Esophagus muscularis mucosa (tissue), 4 donors: ENCODE measurements at regions of chr1 and their contacts with region 1.

Region 1: GRCh38 chr1:20633190-20634064 is at the start of gene PINK1:
- DNase-seq: peak; percentile 96
- H3K4me3 ChIP-seq: peak within 1 kb of the TSS; percentile 88 to 100 (median 98)
- H3K27ac ChIP-seq: peak within 1 kb of the TSS; percentile 94 to 97 (median 95)
- H3K4me1 ChIP-seq: peaks cover 24 to 35% (median 34%) of the 10 kb centered on the region in 4 donors
- H3K27me3 ChIP-seq: peaks cover 0 to 4% (median 0%) of the 10 kb centered on the region in 4 donors
- CTCF ChIP-seq: peak; percentile 99 to 100 (median 99)
- EP300 ChIP-seq: no peak
- POLR2A ChIP-seq: no peak
- total RNA-seq, gene PINK1: 175 to 330 (median 242) TPM

Region 2: DNA sequence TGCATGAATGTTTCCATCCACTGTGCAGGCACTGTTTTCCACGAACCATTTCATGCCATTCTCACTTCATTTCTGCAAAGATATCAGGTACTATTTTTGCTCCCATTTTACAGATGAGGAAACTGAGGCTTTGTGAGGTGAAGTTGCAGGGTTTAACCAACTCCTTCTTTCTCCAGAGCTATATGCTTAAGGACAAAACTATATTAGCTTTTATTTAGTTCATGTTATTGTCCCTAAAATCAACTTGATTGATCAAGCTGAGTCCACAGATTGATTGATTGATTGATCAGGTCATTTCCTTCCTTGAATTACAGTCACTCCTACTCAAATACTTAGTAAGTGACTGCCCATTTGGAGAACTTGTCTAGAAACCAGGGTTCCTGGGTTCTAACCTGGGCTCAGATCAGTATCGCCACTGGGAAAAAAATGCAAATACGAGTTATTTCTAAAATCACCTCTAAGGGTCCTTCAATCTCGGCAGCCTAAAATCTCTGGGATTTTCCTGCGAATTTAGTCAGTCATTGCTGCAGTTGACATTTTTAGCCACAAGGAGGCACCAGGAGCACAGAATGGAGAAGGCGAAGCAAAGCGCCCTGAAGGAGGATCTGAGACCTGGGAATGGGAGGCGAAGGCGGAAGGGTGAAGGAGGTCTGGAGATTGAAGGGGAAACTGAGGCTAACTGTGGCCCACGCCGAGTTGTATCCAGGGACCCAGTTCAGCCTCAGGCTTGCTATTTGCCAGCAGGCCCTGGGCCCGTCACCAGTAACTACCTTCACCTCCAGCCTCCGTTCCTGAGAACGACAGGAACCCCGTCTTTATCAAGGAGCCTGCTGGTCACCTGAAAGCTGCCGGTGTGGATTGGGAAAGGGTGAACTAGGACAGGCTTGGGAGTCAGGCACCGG is 111.2 kb before region 1 on chr1:
- intact Hi-C with region 1: loop called (anchors 1 kb)
- DNase-seq: no peak
- H3K4me3 ChIP-seq: peak overlapping the region in 1 of 4 donors; percentile 45
- H3K27ac ChIP-seq: no peak overlapping the region
- H3K4me1 ChIP-seq: peaks cover 0 to 7% (median 6%) of the 10 kb centered on the region in 4 donors
- H3K27me3 ChIP-seq: peaks cover 0 to 11% (median 0%) of the 10 kb centered on the region in 4 donors
- CTCF ChIP-seq: peak; percentile 84 to 96 (median 93)
- EP300 ChIP-seq: no peak
- POLR2A ChIP-seq: no peak

Region 3: DNA sequence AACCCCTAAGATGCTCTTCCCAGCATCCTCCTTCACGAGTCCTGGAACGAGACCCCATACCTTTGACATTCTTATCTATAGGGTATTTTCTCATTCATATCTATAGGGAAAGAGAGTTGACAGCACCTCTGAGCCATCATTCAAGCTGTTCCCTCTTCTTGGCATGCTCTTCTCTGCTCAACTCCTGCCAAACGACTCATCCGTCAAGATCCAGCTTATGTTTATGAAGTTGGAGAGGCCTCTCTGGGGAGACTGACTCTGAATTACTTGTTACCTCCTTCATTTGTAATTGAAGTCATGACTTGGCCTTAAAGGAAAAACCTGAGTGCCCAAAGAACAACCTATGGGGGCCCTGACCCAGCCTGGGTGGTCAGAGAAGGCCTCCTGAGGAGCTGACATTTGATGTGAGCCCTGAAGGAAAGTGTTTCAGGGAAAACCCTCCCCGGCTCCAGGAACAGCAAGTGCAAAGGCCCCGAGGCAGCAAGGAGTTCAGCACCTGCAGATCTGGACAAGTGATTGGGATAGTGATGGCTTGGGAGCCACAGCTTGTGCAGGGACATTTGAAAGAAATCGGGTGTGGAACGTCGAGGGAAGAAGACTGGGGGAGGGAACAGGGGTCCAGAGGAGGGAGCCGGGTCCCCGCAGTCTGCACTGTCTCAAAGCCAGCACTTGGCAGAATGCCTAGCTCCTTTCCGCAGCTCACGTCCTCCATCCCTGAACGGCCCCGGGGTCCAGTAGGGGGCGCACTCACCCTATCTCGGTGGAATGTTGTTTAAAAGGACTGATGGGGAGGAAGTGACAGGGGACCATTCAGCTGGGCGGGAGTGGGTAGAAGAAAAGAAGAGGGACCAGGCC is 58.5 kb before region 1 on chr1:
- intact Hi-C with region 1: loop called (anchors 2 kb)
- DNase-seq: no peak
- H3K4me3 ChIP-seq: no peak overlapping the region
- H3K27ac ChIP-seq: no peak overlapping the region
- H3K4me1 ChIP-seq: peaks cover 0 to 4% (median 0%) of the 10 kb centered on the region in 4 donors
- H3K27me3 ChIP-seq: peaks cover 0 to 32% (median 0%) of the 10 kb centered on the region in 4 donors
- CTCF ChIP-seq: peak; percentile 51 to 65 (median 62)
- EP300 ChIP-seq: no peak
- POLR2A ChIP-seq: no peak

Region 4: DNA sequence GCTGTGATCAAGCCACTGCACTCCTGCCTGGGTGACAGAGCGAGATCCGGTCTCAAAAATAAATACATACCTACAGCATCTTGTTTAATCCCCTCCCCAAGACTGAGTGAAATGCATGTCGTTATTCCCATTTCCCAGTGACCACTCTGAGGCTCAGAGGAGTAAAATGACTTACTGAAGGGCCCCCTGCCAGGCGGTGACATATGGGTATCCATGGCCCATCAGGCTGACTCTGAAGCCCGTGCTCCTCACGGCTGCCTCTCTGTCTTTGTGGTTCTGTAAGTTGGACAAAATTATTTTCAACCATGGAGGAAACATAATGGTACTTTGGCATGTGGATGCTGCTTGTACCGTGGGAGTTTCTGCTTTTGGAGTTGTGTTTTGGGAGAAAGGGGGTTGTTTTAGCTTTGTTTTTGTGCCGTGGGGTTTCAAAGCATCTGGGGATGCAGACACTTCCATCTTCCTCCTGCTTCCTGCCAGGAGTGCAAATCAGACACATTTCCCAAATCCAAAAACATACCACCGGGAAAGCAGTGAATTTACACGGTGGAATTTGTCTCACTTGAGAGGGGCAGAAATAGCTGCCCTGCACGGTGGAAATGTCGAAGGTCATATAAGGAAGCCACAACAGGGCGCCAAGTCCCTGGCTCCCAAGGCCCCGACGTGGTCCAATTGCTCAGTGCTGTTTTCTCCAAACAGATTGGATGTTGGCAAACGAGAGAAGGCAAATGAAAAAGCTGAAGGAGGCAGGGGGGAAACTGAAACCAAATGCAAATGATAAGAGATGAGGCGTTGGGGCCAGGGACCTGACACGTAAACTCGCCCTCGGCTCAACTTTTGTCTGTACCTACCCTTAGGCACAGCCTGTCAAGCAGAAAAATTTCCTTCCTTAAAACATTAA is 17.2 kb before region 1 on chr1:
- intact Hi-C with region 1: loop called (anchors 2 kb)
- DNase-seq: no peak
- H3K4me3 ChIP-seq: peak overlapping the region in 2 of 4 donors; percentile 7 to 10
- H3K27ac ChIP-seq: peak overlapping the region in 2 of 4 donors; percentile 54 to 55
- H3K4me1 ChIP-seq: peaks cover 18 to 28% (median 25%) of the 10 kb centered on the region in 4 donors
- H3K27me3 ChIP-seq: no peaks in the 10 kb centered on the region
- CTCF ChIP-seq: no peak
- EP300 ChIP-seq: no peak
- POLR2A ChIP-seq: no peak